ENCODE measurements at regions of chr18 and their contacts with region 1.

Region 1: DNA sequence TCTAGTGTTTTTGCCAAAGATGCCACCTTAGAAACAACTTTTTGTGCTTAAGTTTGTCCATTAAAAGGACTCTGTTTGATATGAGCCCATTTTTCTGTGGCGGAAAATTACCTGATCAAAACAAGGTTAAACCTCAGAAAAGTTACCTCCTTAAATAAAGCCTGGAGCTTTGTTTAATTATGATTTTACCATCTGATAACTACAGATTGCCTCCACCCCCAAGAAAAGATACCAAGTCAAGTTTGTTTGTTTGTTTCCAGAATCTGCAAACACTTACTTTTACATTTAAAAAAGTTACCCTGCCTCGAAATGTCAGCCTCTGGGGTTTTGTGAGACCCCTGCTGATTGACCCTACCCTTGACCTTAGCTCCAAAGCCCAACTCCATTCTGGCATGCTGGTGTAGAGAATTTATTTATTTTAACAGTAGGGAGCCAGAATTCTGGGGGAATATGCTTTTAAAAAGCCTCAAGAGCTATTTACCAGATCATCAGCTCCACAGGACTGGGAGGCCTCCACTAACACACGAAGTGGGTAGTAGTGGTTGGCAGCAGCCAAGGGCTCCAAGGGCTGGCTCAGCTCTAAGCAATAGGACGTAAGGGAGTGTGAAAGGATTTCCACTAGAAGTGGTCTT is 23.3 kb upstream of the GREB1L start:
- DNase-seq: no peak
- H3K4me3 ChIP-seq: no peak overlapping the region
- H3K27ac ChIP-seq: no peak overlapping the region
- H3K4me1 ChIP-seq: no peaks in the 10 kb centered on the region
- H3K27me3 ChIP-seq: no peaks in the 10 kb centered on the region
- CTCF ChIP-seq: no peak

Region 2: DNA sequence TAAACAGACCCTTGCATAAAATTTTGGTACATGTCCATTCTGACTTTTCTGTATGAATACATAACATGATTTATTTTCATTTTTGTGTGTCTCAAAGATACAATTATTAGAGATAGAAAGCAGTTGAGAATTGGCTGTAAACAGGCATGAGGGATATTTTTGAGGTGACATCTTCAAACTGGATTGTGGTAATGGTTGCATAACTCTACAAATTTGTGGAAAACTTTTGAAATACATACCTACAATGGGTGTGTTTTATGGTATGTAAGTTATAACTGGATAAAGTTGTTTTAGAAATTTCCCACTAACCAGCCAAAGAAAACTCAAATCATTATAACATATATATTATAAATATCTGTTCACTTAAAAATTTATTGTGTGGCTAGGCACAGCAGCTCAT is 62.9 kb after region 1 on chr18:
- CTCF ChIA-PET with region 1: interaction called, 12 read pairs
- dilution Hi-C with region 1: no loop called
- in situ Hi-C with region 1: no loop called
- intact Hi-C with region 1: no loop called
- DNase-seq: no peak
- H3K4me3 ChIP-seq: no peak overlapping the region
- H3K27ac ChIP-seq: no peak overlapping the region
- H3K4me1 ChIP-seq: no peaks in the 10 kb centered on the region
- H3K27me3 ChIP-seq: peaks cover 3% of the 10 kb centered on the region
- CTCF ChIP-seq: no peak